Aorta (tissue), 5 donors: ENCODE measurements at regions of chr14 and their contacts with region 1.

Region 1: GRCh38 chr14:37753459-37753858 is 158.0 kb downstream of the TTC6 start:
- DNase-seq: no peak
- ATAC-seq: no peak
- H3K4me3 ChIP-seq: no peak overlapping the region
- H3K27ac ChIP-seq: no peak overlapping the region
- H3K4me1 ChIP-seq: no peaks in the 10 kb centered on the region
- H3K27me3 ChIP-seq: no peaks in the 10 kb centered on the region

Region 2: DNA sequence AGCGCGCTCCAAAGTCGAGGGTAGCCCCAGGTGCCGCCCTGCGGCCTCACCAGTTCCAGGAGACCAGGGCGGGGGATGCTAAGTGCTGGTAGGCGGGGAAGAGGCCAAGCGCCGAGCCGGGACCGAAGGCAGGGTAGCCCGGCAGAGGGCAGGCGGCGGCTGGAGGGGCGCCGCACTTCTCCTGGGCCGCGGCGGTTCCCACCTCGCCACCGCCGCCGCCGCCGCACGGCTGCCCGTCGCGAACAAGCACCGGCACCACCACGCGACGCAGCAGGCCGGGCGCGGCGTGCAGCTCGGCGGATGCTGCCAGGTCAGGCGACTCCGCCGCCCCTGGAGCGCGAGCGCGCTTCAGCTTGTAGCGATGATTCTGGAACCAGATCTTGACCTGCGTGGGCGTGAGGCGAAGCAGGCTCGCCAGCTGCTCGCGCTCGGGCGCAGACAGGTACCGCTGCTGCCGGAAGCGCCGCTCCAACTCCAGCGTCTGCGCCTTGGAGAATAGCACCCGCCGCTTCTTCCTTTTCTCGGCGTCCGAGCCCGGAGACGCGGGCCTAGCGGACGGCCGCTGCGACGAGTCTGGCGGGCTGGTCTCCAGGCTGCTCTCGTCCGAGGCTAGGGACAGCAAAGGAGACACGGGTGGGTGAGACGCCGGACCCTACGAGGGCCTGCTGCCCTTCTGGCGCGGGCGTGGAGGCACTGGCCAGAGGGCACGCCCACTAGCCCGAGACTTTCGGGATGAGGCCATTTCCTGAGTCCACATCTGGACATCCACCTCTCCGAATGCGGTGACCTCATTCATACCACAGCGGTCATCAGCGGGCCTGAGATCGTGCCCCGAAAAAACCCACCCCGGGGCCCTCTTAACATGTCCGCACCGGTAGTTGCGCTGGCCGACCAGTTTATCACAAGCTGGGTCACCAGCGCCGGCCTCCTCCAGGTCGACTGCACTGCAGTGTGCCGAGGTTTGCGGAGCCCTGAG is 1172.3 kb before region 1 on chr14:
- intact Hi-C with region 1: loop called in 1 of 2 experiments (anchors 5 kb)
- DNase-seq: peak in 1 of 2 donors; percentile 76
- ATAC-seq: peak; percentile 6
- H3K4me3 ChIP-seq: peak overlapping the region; percentile 12 to 37
- H3K27ac ChIP-seq: no peak overlapping the region
- H3K4me1 ChIP-seq: no peaks in the 10 kb centered on the region
- H3K27me3 ChIP-seq: peaks cover 0 to 2% of the 10 kb centered on the region in 2 donors